ENCODE measurements at regions of chr1 and their contacts with region 1.

Region 1: DNA sequence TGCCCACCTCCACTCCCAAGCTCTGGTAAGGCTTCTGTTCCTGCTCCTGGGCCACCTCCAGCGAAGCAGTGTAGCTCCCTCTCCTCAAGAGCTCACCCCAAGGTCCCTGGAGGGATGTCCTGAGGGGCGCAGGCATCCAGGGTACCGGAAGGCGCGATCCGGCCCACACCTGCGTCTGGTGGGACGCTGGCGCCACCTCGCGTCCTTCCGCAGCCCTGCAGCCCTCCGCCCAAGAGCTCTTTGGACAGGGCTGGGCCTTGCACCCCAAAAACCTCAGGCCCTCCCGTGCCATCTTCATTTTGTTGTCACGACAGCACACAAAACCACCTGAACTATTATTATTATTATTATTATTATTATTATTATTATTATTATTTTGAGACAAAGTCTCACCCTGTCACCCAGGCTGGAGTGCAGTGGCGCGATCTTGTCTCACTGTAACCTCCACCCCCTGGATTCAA is 49.2 kb upstream of the PAX7 start:
- DNase-seq: peak; percentile 85
- H3K4me3 ChIP-seq: no peak overlapping the region; a peak in 1 of 4 replicates
- H3K27ac ChIP-seq: no peak overlapping the region
- H3K4me1 ChIP-seq: no peaks in the 10 kb centered on the region; a peak in 1 of 4 replicates
- H3K27me3 ChIP-seq: no peaks in the 10 kb centered on the region
- CTCF ChIP-seq: peak; percentile 65
- EP300 ChIP-seq: no peak
- RAD21 ChIP-seq: peak; percentile 84

Region 2: DNA sequence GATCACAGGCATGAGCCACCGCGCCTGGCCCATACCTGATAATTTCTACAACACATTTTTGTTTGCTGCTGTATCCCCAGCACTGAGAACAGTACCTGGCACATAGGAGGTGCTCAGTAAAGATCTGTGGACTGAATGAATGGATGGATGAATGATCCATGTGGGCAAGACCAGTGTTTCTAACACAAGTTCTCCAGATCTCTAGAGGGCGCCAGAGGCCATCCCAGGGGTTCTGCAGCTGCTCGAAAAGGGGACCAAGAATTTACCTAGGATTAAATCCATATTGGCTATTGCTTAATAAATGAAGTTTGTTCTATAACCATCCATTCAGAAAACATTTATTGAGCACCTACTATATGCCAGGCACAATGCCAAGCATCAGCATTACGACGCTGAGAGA is 658.6 kb before region 1 on chr1:
- CTCF ChIA-PET with region 1: interaction called, 54 read pairs
- POLR2A ChIA-PET with region 1: interaction called, 3 read pairs
- DNase-seq: peak; percentile 71
- H3K4me3 ChIP-seq: no peak overlapping the region; a peak in 1 of 4 replicates
- H3K27ac ChIP-seq: no peak overlapping the region
- H3K4me1 ChIP-seq: peaks cover 0 to 2% of the 10 kb centered on the region in 2 experiments; a peak in 1 of 4 replicates
- H3K27me3 ChIP-seq: no peaks in the 10 kb centered on the region
- CTCF ChIP-seq: peak; percentile 58
- EP300 ChIP-seq: no peak
- RAD21 ChIP-seq: peak; percentile 94

Region 3: GRCh38 chr1:18322368-18323032 is 258.9 kb before region 1 on chr1:
- CTCF ChIA-PET with region 1: interaction called, 10 read pairs
- POLR2A ChIA-PET with region 1: no interaction called
- DNase-seq: peak; percentile 58
- H3K4me3 ChIP-seq: no peak overlapping the region
- H3K27ac ChIP-seq: no peak overlapping the region
- H3K4me1 ChIP-seq: peaks cover 0 to 21% of the 10 kb centered on the region in 2 experiments; a peak in 1 of 4 replicates
- H3K27me3 ChIP-seq: no peaks in the 10 kb centered on the region
- CTCF ChIP-seq: no peak
- EP300 ChIP-seq: no peak
- RAD21 ChIP-seq: no peak; the same call in 1 of the 2 replicates

Region 4: GRCh38 chr1:18549906-18550305 is 31.5 kb before region 1 on chr1:
- CTCF ChIA-PET with region 1: interaction called, 110 read pairs
- POLR2A ChIA-PET with region 1: no interaction called
- DNase-seq: no peak
- H3K4me3 ChIP-seq: no peak overlapping the region
- H3K27ac ChIP-seq: no peak overlapping the region
- H3K4me1 ChIP-seq: no peaks in the 10 kb centered on the region; a peak in 1 of 4 replicates
- H3K27me3 ChIP-seq: no peaks in the 10 kb centered on the region
- CTCF ChIP-seq: no peak
- EP300 ChIP-seq: no peak
- RAD21 ChIP-seq: no peak

Region 5: DNA sequence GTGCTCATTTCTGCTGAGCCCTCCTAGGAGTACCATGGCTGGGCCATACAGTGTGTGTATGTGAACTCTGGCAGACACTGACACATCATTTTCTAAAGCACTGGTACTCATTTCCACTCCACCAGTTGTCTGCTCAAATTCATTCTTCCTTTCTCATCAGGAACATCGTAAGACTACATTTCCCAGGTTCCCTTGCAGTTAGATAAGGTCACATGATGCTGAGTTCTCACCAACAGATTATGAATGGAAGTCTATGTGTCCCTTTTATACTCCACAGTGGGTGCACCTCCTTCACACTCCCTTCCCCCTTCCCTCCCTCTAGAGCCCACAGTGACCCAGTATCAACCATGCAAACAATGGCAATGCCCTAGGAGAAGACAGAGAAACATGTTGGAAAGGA is 10.9 kb after region 1 on chr1:
- CTCF ChIA-PET with region 1: interaction called, 144 read pairs
- POLR2A ChIA-PET with region 1: interaction called, 3 read pairs
- DNase-seq: no peak
- H3K4me3 ChIP-seq: no peak overlapping the region
- H3K27ac ChIP-seq: no peak overlapping the region
- H3K4me1 ChIP-seq: no peaks in the 10 kb centered on the region
- H3K27me3 ChIP-seq: no peaks in the 10 kb centered on the region; the same call in 1 of the 2 replicates
- CTCF ChIP-seq: no peak
- EP300 ChIP-seq: no peak
- RAD21 ChIP-seq: no peak

Region 6: DNA sequence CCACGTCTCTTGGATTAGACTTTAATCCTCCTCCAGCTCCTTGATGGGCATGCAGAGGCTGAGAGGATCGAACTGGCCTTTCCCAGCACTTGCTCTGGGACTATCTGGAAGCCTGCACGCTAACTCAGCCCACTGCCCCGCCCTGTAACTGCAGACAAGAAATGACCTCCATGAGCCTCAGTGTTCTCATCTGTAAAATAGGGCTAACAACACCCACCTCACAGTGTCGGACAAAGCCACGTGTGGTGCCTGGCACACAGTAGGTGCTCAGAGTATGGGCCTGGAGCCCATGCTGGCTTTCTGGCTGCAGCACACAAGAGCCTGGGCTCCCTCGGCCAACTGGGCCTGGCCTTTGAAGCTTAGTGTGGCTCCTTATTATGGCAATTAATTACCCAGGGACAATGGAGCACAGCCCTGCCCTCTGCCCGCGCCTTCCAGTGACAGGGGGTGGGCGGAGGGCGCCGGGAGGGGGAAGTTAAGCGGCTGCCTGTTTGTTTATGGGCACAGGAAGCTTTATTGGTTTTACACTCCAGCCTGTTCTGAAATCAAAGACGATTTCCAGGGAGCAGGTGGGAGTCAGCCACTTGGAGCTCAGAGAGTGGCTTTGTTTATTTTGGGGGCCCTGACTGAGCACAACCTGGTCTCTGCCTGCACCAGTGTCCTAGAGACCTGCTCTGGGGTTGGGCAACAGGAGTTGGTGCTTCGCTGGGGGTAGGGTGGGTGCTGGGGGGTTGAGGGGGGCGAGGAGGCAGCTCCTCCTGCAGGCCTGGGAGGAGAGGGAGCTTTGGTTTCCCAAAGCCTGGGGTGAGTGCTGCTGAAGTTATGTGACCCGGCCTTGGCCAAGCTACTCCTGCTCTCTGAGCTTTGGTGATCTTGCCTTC is 80.2 kb after region 1 on chr1:
- CTCF ChIA-PET with region 1: no interaction called
- POLR2A ChIA-PET with region 1: no interaction called
- DNase-seq: no peak
- H3K4me3 ChIP-seq: no peak overlapping the region
- H3K27ac ChIP-seq: no peak overlapping the region
- H3K4me1 ChIP-seq: no peaks in the 10 kb centered on the region
- H3K27me3 ChIP-seq: peaks cover 8% of the 10 kb centered on the region; the same call in 1 of the 2 replicates
- CTCF ChIP-seq: no peak
- EP300 ChIP-seq: no peak
- RAD21 ChIP-seq: no peak

Measured in SK-N-SH (cell line).